ENCODE measurements at regions of chr2 and their contacts with region 1.

Region 1: GRCh38 chr2:100780203-100781008 is 39.5 kb upstream of the NPAS2 start:
- DNase-seq: peak; percentile 75
- H3K4me3 Mint-ChIP-seq: peak overlapping the region; percentile 42
- H3K27ac Mint-ChIP-seq: peak overlapping the region; percentile 91
- H3K4me1 Mint-ChIP-seq: peaks cover 54% of the 10 kb centered on the region
- H3K27me3 Mint-ChIP-seq: no peaks in the 10 kb centered on the region
- CTCF ChIP-seq: no peak

Region 2: DNA sequence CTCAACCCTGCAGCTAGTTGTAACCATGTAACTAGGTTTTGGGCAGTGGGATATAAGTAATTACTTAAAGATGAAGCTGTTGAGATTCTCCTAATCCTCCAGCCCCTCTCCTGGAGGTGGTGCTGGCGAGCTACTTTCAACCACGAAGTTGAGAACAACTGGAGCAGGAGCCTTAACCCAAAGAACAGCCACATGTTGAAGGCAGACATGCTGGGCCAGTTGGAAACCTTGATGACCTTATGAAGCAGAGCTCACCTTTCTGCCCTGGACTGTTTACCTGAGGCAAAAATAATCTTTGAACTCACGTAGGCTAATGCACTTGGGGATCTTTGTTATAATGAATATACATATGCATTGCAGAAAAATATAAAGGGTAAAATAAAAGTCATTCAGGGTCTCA is 50.1 kb before region 1 on chr2:
- CTCF ChIA-PET with region 1: no interaction called
- intact Hi-C with region 1: loop called (anchors 5 kb)
- DNase-seq: peak; percentile 76
- H3K4me3 Mint-ChIP-seq: no peak overlapping the region
- H3K27ac Mint-ChIP-seq: no peak overlapping the region
- H3K4me1 Mint-ChIP-seq: peaks cover 34% of the 10 kb centered on the region
- H3K27me3 Mint-ChIP-seq: no peaks in the 10 kb centered on the region
- CTCF ChIP-seq: peak; percentile 68

Region 3: GRCh38 chr2:100752628-100753333 is 27.6 kb before region 1 on chr2:
- CTCF ChIA-PET with region 1: interaction called, 6 read pairs
- intact Hi-C with region 1: loop called (anchors 2 kb)
- DNase-seq: no peak
- H3K4me3 Mint-ChIP-seq: no peak overlapping the region
- H3K27ac Mint-ChIP-seq: peak overlapping the region; percentile 82
- H3K4me1 Mint-ChIP-seq: peaks cover 83% of the 10 kb centered on the region
- H3K27me3 Mint-ChIP-seq: no peaks in the 10 kb centered on the region
- CTCF ChIP-seq: no peak

Region 4: GRCh38 chr2:100767224-100767653 is 13.2 kb before region 1 on chr2:
- CTCF ChIA-PET with region 1: interaction called, 11 read pairs
- intact Hi-C with region 1: no loop called
- DNase-seq: no peak
- H3K4me3 Mint-ChIP-seq: no peak overlapping the region
- H3K27ac Mint-ChIP-seq: peak overlapping the region; percentile 82
- H3K4me1 Mint-ChIP-seq: peaks cover 43% of the 10 kb centered on the region
- H3K27me3 Mint-ChIP-seq: no peaks in the 10 kb centered on the region
- CTCF ChIP-seq: no peak

Measured in Calu3 (cell line).